Psoas muscle (tissue), 8 donors: ENCODE measurements at regions of chr17 and their contacts with region 1.

Region 1: GRCh38 chr17:61338000-61338798 is 61.4 kb upstream of the TBX2 start:
- DNase-seq: no peak
- ATAC-seq: peak in 1 of 4 donors; percentile 31
- H3K4me3 ChIP-seq: no peak overlapping the region
- H3K27ac ChIP-seq: no peak overlapping the region
- H3K4me1 ChIP-seq: no peaks in the 10 kb centered on the region
- H3K27me3 ChIP-seq: no peaks in the 10 kb centered on the region
- CTCF ChIP-seq: no peak

Region 2: DNA sequence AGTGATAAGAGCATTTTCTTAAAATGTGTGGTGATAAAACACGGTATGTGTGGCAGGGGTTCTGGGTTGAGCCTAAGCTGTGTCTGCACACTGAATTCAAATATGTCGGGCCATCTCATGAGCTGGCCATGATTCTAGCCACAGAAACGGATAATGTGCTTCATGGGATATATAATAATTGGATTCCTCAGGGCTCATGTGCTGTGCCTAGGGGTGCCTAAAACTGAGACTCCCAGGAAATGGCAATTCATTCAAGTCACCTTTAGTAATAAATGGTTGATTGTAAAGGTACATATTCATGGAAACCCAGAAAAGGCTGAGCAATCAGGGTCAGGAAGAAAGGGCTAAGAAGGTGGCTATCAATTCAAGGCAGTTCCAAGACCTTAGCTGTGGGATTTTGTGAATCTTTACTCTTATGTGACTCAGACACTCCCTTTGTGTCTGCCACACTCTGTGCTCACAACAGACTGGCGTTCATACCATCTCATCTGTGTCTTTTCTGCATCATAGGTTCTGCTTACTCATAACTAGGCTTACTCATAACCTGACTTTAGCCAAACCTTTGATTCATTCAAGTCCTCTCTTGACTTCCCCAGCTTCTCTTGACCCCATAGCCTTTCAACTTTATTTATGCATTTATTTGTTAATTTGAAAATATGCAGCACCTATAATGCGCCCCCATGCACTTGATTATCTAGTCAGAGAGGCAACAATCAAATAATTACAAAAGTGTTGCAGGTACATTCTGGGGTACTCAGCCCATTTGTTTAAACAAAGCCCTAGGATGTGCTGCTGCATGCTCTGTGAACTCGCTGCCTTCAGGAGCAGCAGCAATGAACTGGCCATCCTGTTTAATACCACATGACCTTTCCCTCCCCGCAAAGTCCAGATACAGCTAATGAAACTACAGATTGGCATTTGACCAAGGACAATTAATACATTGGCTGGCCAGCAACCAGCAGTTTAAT is 755.3 kb after region 1 on chr17:
- intact Hi-C with region 1: loop called in 1 of 2 experiments (anchors 10 kb)
- DNase-seq: no peak
- ATAC-seq: peak in 1 of 4 donors; percentile 52
- H3K4me3 ChIP-seq: no peak overlapping the region
- H3K27ac ChIP-seq: no peak overlapping the region
- H3K4me1 ChIP-seq: no peaks in the 10 kb centered on the region
- H3K27me3 ChIP-seq: no peaks in the 10 kb centered on the region
- CTCF ChIP-seq: no peak